Left ventricle myocardium superior (tissue), 1 donor: ENCODE measurements at regions of chr17 and their contacts with region 1.

Region 1: GRCh38 chr17:40647624-40648383 is at the start of gene SMARCE1:
- DNase-seq: peak; percentile 80
- ATAC-seq: peak; percentile 92
- total RNA-seq, gene SMARCE1: 59.8 TPM

Region 2: DNA sequence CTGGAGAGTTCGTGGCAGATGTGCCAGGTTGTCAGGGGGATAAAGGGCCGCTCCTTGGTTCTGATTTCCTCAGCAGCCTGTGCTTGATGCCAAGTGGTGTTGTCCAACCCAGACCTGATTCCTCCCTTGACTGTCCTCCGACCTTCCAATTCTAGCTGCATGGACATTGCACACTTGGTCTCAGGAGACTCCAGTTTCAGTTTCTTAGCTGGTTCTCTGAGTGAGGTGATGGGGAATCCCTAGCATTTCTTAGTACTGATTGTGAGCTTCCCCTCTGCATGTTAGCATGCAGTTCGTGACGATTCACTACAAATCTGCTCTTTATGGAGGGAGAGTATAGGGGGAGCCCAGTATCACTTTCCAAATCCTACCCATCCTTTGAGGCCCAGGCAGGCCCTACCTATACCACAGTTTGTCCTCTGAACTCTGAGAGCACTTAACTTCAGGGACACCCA is 70.2 kb before region 1 on chr17:
- intact Hi-C with region 1: no loop called
- DNase-seq: no peak
- ATAC-seq: no peak

Region 3: DNA sequence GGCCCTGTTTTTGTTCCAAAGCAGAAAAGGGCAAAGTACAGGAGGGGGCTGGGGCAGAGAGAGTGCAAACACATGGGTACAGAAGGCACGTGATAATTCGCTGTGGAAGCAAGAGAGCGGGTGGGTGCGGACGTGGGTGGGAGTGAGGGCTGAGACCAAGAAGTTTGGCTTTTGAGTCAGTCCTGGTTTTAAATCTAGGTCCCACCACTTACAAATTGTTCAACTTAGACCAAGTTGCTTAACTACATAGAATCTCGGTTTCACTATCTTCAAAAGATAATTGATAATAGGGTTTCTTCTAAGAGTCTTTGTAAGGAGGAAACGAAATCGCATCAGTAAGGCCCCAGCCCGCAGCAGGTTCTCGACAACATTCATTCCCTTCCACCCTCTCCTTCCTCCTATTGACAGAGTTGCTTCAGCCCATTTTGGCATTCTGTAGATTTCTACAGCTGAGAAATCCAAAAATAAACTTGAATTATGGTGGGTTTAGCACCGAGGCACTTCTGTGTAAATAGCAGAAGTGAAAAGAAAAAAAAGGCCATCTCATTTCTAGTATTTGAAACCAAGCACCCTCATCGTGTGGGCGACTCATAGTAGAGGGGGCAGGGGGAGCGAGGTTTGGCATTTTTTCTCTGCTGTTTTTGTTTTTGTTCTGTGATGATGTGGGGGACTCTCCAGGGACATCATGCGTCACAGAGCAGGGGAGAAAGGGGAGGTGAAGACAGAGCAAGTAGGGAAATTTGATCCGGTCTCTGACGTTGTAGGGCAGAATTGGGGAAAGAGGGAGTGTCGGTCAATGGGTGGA is 48.9 kb before region 1 on chr17:
- intact Hi-C with region 1: no loop called
- DNase-seq: no peak
- ATAC-seq: peak; percentile 56

Region 4: GRCh38 chr17:40791787-40792436 is 144.1 kb after region 1 on chr17:
- intact Hi-C with region 1: loop called (anchors 10 kb)
- DNase-seq: no peak
- ATAC-seq: peak; percentile 50